ENCODE measurements at regions of chr2 and their contacts with region 1.

Region 1: DNA sequence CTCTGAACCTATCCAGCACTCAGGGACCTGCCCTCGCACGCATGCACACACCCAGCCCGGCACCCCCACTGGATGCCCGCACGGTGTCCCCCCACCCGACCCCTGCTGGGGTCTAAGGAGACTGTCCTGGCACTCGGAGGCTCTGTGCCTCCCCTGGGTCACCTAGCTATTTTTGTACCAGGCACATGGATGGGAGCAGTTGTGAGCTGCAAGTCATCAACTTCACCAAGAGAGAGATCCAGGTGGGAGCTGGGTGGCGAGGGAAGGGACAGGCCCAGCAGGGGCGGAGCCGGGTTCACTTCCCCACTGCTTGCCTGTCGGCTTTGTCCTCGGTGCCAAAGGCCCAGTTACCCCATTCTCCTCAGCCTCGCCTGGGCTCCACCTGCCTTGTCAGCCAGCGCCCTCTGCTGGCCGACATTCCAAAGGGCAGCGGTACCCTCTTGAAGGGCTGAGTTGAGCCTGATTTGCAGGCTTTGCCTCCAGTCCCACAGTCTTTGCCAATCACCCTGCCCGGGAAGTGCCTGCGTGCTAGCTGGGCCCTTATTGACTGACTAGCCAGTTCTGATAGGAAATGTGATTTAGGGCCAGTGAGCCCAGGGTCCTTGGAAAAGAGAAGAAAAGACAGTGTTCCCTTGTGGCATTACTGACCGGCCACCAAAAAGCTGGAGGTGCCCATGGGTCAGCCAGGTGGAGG is 5.8 kb downstream of the NT5DC4 start:
- DNase-seq: peak; percentile 86
- H3K4me3 ChIP-seq: no peak overlapping the region
- H3K27ac ChIP-seq: no peak overlapping the region
- H3K4me1 ChIP-seq: peaks cover 3% of the 10 kb centered on the region
- H3K27me3 ChIP-seq: no peaks in the 10 kb centered on the region
- CTCF ChIP-seq: peak; percentile 95 to 97
- POLR2A ChIP-seq: no peak

Region 2: DNA sequence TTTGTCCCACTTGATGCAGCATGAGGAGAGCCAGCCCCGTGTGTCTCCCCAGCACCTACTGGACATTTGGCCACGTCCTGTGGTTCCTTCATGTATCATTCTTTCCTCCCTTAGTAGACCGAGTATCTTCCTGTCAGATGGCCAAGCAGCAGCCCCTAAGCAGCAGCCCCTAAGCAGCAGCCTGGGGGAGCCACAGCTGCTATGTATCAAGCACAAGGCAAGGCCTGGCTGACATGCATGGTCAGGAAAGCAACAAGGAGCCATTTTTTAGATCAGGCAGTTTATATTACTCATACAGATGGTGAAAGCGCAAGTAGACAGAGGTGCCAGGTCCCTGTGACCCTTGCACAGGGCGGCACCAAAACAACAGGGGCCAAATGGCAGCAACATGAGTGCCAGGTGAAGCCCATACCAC is 120.1 kb before region 1 on chr2:
- CTCF ChIA-PET with region 1: interaction called, 207 read pairs
- POLR2A ChIA-PET with region 1: no interaction called
- dilution Hi-C with region 1: no loop called
- intact Hi-C with region 1: no loop called
- DNase-seq: no peak
- H3K4me3 ChIP-seq: no peak overlapping the region
- H3K27ac ChIP-seq: no peak overlapping the region
- H3K4me1 ChIP-seq: no peaks in the 10 kb centered on the region
- H3K27me3 ChIP-seq: no peaks in the 10 kb centered on the region
- CTCF ChIP-seq: no peak
- POLR2A ChIP-seq: no peak

Region 3: GRCh38 chr2:112645310-112646101 is 81.1 kb before region 1 on chr2 and contains the start of gene SLC20A1:
- CTCF ChIA-PET with region 1: interaction called, 40 read pairs
- POLR2A ChIA-PET with region 1: no interaction called
- dilution Hi-C with region 1: no loop called
- intact Hi-C with region 1: loop called (anchors 1 kb)
- DNase-seq: peak; percentile 91
- H3K4me3 ChIP-seq: peak within 1 kb of the TSS; percentile 84 to 90 (median 89)
- H3K27ac ChIP-seq: peak within 1 kb of the TSS; percentile 90
- H3K4me1 ChIP-seq: peaks cover 71% of the 10 kb centered on the region
- H3K27me3 ChIP-seq: no peaks in the 10 kb centered on the region
- CTCF ChIP-seq: peak; percentile 38 to 40
- POLR2A ChIP-seq: peak; percentile 98
- total RNA-seq, gene SLC20A1: 141 and 149 TPM in 2 replicates

Region 4: GRCh38 chr2:112692496-112692911 is 34.1 kb before region 1 on chr2:
- CTCF ChIA-PET with region 1: interaction called, 59 read pairs
- POLR2A ChIA-PET with region 1: no interaction called
- dilution Hi-C with region 1: no loop called
- intact Hi-C with region 1: loop called (anchors 2 kb)
- DNase-seq: peak; percentile 73
- H3K4me3 ChIP-seq: no peak overlapping the region
- H3K27ac ChIP-seq: peak overlapping the region; percentile 72
- H3K4me1 ChIP-seq: peaks cover 41% of the 10 kb centered on the region
- H3K27me3 ChIP-seq: no peaks in the 10 kb centered on the region
- CTCF ChIP-seq: no peak
- POLR2A ChIP-seq: no peak

Region 5: GRCh38 chr2:112755444-112755843 is 28.8 kb after region 1 on chr2:
- CTCF ChIA-PET with region 1: no interaction called
- POLR2A ChIA-PET with region 1: no interaction called
- dilution Hi-C with region 1: no loop called
- intact Hi-C with region 1: no loop called
- DNase-seq: no peak
- H3K4me3 ChIP-seq: no peak overlapping the region
- H3K27ac ChIP-seq: no peak overlapping the region
- H3K4me1 ChIP-seq: no peaks in the 10 kb centered on the region
- H3K27me3 ChIP-seq: no peaks in the 10 kb centered on the region
- CTCF ChIP-seq: no peak
- POLR2A ChIP-seq: no peak

Region 6: DNA sequence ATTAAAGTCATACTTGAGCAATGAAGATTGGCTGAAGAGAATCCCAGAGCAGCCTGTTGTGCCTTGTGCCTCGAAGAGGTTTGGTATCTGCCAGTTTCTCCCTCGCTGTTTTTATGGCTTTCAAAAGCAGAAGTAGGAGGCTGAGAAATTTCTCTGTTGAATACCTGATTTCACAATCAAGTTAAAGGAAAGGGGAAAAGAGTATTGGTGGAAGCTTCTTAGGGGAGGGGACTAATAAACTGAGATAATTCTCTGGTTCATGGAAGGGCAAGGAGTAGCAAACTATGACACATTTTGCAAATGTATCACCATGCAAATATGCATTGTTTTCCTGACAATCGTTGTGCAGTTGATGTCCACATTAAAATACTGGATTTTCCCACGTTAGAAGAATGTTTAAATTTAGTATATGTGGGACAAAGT is 110.1 kb after region 1 on chr2 and contains the start of gene IL1B:
- CTCF ChIA-PET with region 1: no interaction called
- POLR2A ChIA-PET with region 1: no interaction called
- dilution Hi-C with region 1: no loop called
- intact Hi-C with region 1: no loop called
- DNase-seq: peak; percentile 11
- H3K4me3 ChIP-seq: no peak within 1 kb of the TSS
- H3K27ac ChIP-seq: no peak within 1 kb of the TSS
- H3K4me1 ChIP-seq: peaks cover 10% of the 10 kb centered on the region
- H3K27me3 ChIP-seq: peaks cover 0 to 19% of the 10 kb centered on the region in 2 experiments
- CTCF ChIP-seq: no peak
- POLR2A ChIP-seq: no peak
- total RNA-seq, gene IL1B: not detected in 2 replicates

Region 7: DNA sequence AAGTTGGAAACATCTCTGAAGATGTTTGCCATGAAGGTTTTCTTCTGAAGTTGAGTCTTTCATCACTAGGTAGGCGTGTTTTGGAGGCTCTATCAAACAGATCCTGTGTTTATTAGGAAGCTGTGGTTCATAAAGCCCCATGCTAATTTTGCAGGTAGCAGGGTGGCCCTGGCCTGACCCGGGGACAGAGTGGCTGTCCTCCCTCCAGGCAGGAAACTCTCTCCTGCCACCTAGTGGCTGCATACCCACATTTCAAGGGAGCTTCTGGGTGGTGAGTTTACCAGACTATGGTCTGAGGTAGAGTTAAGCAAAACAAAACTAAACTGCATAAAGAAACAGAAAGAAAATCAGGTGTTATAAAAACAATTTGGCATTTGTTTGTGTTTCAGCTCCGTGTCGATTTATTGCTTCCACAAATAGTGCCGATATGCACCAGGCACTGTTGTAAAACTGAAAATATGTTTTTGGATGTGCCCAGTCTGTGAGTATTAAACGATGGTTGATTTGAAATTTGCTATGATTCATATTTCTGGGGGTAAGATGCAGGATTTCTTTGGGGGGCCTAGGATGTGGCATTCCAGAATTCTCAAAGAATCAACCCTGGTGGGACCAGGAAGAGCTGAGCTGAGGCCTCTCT is 158.3 kb after region 1 on chr2:
- CTCF ChIA-PET with region 1: interaction called, 12 read pairs
- POLR2A ChIA-PET with region 1: no interaction called
- dilution Hi-C with region 1: no loop called
- intact Hi-C with region 1: no loop called
- DNase-seq: peak; percentile 38
- H3K4me3 ChIP-seq: no peak overlapping the region
- H3K27ac ChIP-seq: no peak overlapping the region
- H3K4me1 ChIP-seq: peaks cover 19% of the 10 kb centered on the region
- H3K27me3 ChIP-seq: no peaks in the 10 kb centered on the region
- CTCF ChIP-seq: peak; percentile 59 to 74
- POLR2A ChIP-seq: no peak